Mammary epithelial cell (primary cell): ENCODE measurements at regions of chr7 and their contacts with region 1.

Region 1: DNA sequence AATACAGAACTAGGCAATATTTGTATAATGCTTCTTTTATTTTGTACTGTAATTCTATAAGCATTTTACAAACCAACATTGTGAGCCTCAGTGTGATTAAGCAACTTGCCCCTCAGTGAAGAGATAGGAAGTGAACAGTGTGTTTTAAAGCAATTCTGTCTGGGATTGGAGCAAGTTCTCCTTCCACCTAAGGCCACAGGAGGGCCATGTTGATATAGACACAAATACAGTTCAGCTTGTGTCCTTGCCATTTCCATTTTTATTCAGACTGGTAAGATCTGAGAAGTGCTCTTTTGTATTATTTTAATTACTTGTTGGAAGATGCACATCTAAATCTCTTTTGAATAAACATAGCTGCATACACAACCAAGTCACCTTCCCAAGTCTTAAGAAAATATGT is 416.3 kb upstream of the COBL start:
- DNase-seq: no peak
- H3K4me3 ChIP-seq: no peak overlapping the region
- H3K27ac ChIP-seq: no peak overlapping the region
- H3K4me1 ChIP-seq: no peaks in the 10 kb centered on the region
- H3K27me3 ChIP-seq: no peaks in the 10 kb centered on the region
- CTCF ChIP-seq: no peak

Region 2: GRCh38 chr7:50751146-50751545 is 981.8 kb before region 1 on chr7:
- CTCF ChIA-PET with region 1: no interaction called
- dilution Hi-C with region 1: no loop called
- in situ Hi-C with region 1: no loop called
- intact Hi-C with region 1: no loop called
- DNase-seq: no peak
- H3K4me3 ChIP-seq: no peak overlapping the region
- H3K27ac ChIP-seq: no peak overlapping the region
- H3K4me1 ChIP-seq: no peaks in the 10 kb centered on the region
- H3K27me3 ChIP-seq: no peaks in the 10 kb centered on the region
- CTCF ChIP-seq: no peak

Region 3: DNA sequence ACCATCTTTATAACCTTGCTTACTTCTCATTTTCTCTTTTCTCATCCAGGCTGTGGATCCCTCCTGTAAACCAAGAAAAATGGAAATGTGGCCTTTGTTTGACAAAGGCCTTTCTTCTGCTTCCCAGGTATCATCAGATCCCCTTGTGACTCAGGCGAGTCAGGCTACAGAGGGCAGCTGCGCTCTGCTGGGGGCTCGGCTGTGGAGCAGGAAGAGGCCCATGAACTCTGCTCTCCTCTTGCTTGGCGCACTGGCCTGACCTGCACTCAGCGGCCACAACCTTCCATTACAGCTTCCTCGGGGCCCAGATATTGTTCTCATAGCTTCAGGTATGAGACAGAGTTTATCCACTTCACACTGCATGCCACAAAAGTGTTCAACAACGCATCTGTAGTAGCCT is 41.2 kb after region 1 on chr7:
- CTCF ChIA-PET with region 1: no interaction called
- dilution Hi-C with region 1: loop called (anchors 5 kb)
- in situ Hi-C with region 1: no loop called
- intact Hi-C with region 1: no loop called
- DNase-seq: no peak
- H3K4me3 ChIP-seq: no peak overlapping the region
- H3K27ac ChIP-seq: no peak overlapping the region
- H3K4me1 ChIP-seq: no peaks in the 10 kb centered on the region
- H3K27me3 ChIP-seq: no peaks in the 10 kb centered on the region
- CTCF ChIP-seq: no peak